ENCODE measurements at regions of chr11 and their contacts with region 1.

Region 1: GRCh38 chr11:120108154-120108865 is 29.6 kb downstream of the TRIM29 start:
- DNase-seq: peak; percentile 86
- ATAC-seq: peak; percentile 91
- H3K4me3 Mint-ChIP-seq: no peak overlapping the region
- H3K27ac Mint-ChIP-seq: no peak overlapping the region
- H3K4me1 Mint-ChIP-seq: peaks cover 23% of the 10 kb centered on the region
- H3K27me3 Mint-ChIP-seq: no peaks in the 10 kb centered on the region; the same call in 1 of the 2 replicates
- CTCF ChIP-seq: peak; percentile 99

Region 2: DNA sequence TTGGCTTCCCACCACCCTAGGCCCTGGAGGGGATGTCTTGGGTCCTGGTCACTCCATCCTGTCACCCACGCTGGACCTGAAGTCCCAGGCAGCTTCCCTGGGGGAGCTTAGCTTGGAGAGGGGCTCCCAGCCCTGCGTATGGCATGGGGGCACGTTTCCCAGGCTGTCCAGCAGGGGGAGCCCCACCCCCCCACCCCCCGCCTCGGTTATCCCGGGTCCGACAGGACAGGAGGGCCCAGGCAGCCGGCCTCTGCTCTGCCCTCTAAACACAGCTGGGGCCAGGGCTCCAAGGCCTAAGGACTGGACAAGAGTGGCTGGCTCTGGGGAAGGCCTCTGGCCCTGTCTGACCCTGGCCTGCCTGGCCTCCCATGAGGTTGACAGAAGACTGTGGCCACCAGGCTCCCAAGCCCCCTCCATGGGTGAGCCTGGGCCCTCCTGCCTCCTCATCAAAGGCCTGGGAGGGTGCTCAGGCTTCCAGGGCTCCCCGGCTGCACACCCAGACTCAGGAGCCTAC is 484.2 kb before region 1 on chr11:
- CTCF ChIA-PET with region 1: interaction called, 12 read pairs
- POLR2A ChIA-PET with region 1: no interaction called
- DNase-seq: no peak
- ATAC-seq: peak; percentile 34
- H3K4me3 Mint-ChIP-seq: no peak overlapping the region
- H3K27ac Mint-ChIP-seq: no peak overlapping the region
- H3K4me1 Mint-ChIP-seq: peaks cover 41% of the 10 kb centered on the region
- H3K27me3 Mint-ChIP-seq: peaks cover 4% of the 10 kb centered on the region
- CTCF ChIP-seq: peak; percentile 90

Region 3: DNA sequence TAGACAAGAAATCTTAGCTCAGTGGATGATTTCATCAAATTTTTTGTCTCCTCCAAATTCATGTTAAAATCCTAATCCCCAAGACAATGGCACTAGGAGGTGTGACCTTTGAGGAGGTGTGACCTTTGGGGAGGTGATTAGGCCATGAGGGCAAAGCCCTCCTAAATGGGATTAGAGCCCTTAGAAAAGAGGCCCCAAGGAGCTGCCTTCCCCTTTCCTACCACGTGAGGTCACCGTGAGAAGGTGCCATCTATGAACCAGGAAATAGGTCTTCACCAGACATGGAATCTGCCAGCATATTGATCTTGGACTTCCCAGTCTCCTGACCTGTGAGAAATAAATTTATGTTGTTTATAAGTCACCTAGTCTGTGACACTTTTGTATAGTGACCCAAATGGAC is 109.1 kb before region 1 on chr11:
- CTCF ChIA-PET with region 1: interaction called, 24 read pairs
- POLR2A ChIA-PET with region 1: no interaction called
- DNase-seq: peak; percentile 41
- ATAC-seq: peak; percentile 61
- H3K4me3 Mint-ChIP-seq: no peak overlapping the region
- H3K27ac Mint-ChIP-seq: no peak overlapping the region
- H3K4me1 Mint-ChIP-seq: peaks cover 26% of the 10 kb centered on the region
- H3K27me3 Mint-ChIP-seq: peaks cover 6% of the 10 kb centered on the region; the same call in 1 of the 2 replicates
- CTCF ChIP-seq: no peak

Region 4: DNA sequence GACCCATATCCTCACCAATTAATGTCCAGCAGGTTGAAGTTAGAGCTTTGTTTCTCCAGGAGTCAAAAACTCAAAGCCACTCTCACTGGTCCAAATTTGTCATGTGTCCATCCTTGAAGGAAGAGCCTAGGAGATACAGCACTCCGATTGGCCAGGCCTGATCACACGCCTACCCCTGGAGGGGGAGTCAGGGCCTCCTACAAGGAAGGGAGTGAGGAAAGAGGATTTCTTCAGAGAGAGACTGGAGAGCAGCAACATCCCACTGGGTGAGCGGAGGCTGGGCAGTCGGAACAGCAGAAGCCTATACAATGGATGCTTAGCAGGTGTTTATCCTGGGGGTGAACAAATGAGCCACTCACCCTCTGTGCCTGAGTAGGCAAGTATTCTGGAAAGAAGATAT is 84.3 kb before region 1 on chr11:
- CTCF ChIA-PET with region 1: interaction called, 12 read pairs
- POLR2A ChIA-PET with region 1: no interaction called
- DNase-seq: no peak
- ATAC-seq: peak; percentile 42
- H3K4me3 Mint-ChIP-seq: no peak overlapping the region; the same call in 1 of the 2 replicates
- H3K27ac Mint-ChIP-seq: 0 out of 2 replicates have a peak overlapping the region, but pooled peaks have one; percentile 63
- H3K4me1 Mint-ChIP-seq: peaks cover 30% of the 10 kb centered on the region
- H3K27me3 Mint-ChIP-seq: peaks cover 12% of the 10 kb centered on the region
- CTCF ChIP-seq: no peak

Region 5: GRCh38 chr11:120079750-120080490 is 28.4 kb before region 1 on chr11:
- CTCF ChIA-PET with region 1: interaction called, 27 read pairs
- POLR2A ChIA-PET with region 1: no interaction called
- DNase-seq: peak; percentile 68
- ATAC-seq: peak; percentile 89
- H3K4me3 Mint-ChIP-seq: no peak overlapping the region
- H3K27ac Mint-ChIP-seq: no peak overlapping the region
- H3K4me1 Mint-ChIP-seq: peaks cover 7% of the 10 kb centered on the region
- H3K27me3 Mint-ChIP-seq: peaks cover 39% of the 10 kb centered on the region
- CTCF ChIP-seq: peak; percentile 81

Region 6: DNA sequence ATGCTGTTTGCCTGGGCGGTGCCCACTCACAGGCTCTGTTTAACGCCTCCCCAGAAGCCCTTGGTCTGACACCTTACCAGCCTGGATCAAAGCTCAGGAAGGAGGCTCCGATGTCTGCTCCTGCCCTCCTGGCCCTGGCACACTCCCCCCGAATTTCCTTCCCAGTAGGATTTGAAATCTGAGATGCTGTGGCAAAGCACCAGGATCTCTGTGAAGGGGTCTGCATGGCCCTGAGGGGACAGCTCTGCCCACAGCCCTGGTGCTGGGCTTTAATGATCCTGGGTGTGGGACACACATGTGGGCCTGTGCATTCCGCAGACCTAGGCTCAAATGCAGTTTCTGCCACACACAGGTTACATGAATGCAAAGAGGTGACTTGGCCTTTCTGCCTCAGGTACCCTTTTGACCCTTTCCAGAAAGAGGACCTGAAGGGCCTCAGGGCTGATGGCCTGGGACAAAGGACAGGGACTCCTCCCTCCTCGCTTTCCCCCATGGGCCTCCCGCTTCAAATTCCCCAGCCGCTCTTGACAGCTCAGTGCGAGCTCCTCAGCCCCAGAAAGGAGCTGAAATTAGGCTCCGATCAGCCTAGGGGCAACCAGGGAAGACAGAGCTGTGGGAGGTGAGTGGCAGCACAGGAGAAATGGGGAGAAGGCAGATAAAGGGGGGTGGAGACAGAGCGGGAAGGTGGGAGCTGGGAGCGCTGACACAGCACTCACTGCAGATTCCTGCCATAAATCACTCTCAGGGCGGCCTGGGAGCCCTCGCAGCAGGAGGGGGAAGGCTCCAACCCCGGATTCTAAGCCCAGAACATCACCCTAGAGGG is 11.7 kb before region 1 on chr11:
- CTCF ChIA-PET with region 1: interaction called, 23 read pairs
- POLR2A ChIA-PET with region 1: no interaction called
- DNase-seq: no peak
- ATAC-seq: peak; percentile 65
- H3K4me3 Mint-ChIP-seq: peak overlapping the region; percentile 34; the same call in 1 of the 2 replicates
- H3K27ac Mint-ChIP-seq: no peak overlapping the region
- H3K4me1 Mint-ChIP-seq: peaks cover 21% of the 10 kb centered on the region
- H3K27me3 Mint-ChIP-seq: peaks cover 9% of the 10 kb centered on the region
- CTCF ChIP-seq: no peak

Region 7: DNA sequence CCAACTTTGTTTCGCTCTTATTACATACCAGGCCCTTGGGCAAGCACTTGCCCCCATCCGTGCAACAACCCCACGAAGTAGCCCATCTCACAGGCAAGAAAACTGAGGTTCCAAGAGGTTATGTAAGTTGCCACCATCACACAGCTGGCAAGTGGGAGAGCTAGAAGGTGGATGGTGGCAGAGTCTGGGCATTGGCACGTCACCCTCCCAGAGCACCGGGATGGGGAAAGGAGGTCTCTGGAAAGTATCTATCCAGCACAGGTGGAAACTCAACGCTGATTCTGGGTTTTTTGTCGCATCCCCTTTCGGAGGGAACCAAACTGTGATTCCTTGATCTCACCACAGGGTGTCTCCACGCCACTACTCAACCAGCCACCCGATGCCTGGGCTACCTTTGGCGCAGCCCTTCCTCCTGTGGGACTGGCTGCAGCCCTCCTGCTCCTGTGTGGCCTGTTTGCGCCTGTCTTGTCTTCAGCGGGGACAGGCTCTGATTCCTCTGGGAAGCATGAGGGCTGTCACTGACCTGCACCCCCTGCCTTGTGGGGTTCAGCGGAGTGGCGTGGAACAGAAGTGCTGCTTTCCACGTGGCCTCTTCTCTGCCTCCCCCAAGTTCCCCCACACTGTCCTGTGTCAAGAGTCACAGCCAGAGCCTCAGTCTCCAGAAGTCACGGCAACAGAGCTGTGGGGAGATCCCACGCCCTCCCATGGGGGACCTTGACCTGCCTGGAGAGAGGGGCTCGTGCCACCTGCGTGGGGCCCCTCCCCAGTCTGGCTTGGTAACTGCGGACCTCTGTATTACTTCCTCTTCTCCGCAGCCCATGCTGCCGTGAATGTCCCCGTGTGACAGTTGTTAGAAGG is 64.0 kb after region 1 on chr11:
- CTCF ChIA-PET with region 1: interaction called, 36 read pairs
- POLR2A ChIA-PET with region 1: no interaction called
- DNase-seq: peak; percentile 82
- ATAC-seq: peak; percentile 50
- H3K4me3 Mint-ChIP-seq: no peak overlapping the region
- H3K27ac Mint-ChIP-seq: no peak overlapping the region
- H3K4me1 Mint-ChIP-seq: peaks cover 9% of the 10 kb centered on the region; the same call in 1 of the 2 replicates
- H3K27me3 Mint-ChIP-seq: peaks cover 89% of the 10 kb centered on the region
- CTCF ChIP-seq: peak; percentile 27; the same call in 1 of the 2 replicates